ENCODE measurements at regions of chr13 and their contacts with region 1.

Region 1: GRCh38 chr13:33931397-33932311 is 113.7 kb downstream of the RFC3 start:
- DNase-seq: peak; percentile 2
- ATAC-seq: peak; percentile 77; the same call in 1 of the 2 replicates
- H3K4me3 ChIP-seq: no peak overlapping the region
- H3K27ac ChIP-seq: no peak overlapping the region
- H3K4me1 ChIP-seq: no peaks in the 10 kb centered on the region
- H3K27me3 ChIP-seq: no peaks in the 10 kb centered on the region
- CTCF ChIP-seq: peak; percentile 55

Region 2: DNA sequence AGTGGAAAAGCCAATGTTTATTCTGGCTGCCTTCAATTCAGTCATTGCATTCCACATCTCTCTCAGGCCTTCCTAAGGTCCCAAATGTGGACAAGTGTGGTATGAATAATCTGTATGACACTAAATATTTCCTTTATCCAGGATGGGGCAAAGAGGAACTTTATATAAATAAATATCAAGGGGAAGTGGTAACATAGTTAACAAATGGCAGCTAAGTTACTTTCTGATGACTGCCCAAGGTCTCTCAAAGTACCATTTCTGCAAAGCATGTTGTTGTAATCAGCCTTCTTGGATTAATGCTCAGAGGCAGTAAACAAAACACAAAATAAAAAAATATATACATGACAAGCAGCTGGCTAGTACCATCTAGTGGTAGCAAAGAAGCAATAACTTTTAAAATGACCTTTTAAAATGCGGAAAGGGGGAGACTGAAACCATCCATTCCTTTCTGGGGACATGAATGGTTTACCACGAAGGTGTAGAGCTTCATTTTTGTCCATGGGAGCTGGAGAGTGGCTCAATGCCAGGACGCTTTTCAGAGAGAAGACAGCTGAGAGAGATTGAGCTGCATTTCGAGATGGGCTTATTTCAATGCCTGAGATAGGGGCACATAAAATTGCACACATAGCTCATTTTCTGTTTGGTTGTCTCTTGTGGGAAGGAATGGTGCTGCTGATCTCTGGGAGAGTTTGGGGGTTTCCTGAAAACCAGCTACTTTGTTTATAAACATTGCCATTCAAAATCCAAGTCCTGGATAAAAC is 145.5 kb after region 1 on chr13:
- CTCF ChIA-PET with region 1: no interaction called
- POLR2A ChIA-PET with region 1: no interaction called
- in situ Hi-C with region 1: no loop called
- intact Hi-C with region 1: loop called (anchors 5 kb)
- DNase-seq: no peak
- ATAC-seq: no peak
- H3K4me3 ChIP-seq: no peak overlapping the region; a peak in 1 of 4 replicates
- H3K27ac ChIP-seq: no peak overlapping the region
- H3K4me1 ChIP-seq: no peaks in the 10 kb centered on the region
- H3K27me3 ChIP-seq: no peaks in the 10 kb centered on the region
- CTCF ChIP-seq: peak; percentile 66

Region 3: GRCh38 chr13:35157143-35157755 is 1225.6 kb after region 1 on chr13:
- CTCF ChIA-PET with region 1: no interaction called
- POLR2A ChIA-PET with region 1: no interaction called
- in situ Hi-C with region 1: no loop called
- intact Hi-C with region 1: loop called (anchors 2 kb)
- DNase-seq: no peak
- ATAC-seq: peak; percentile 58; the same call in 1 of the 2 replicates
- H3K4me3 ChIP-seq: no peak overlapping the region
- H3K27ac ChIP-seq: no peak overlapping the region
- H3K4me1 ChIP-seq: no peaks in the 10 kb centered on the region
- H3K27me3 ChIP-seq: no peaks in the 10 kb centered on the region
- CTCF ChIP-seq: peak; percentile 57; the same call in 1 of the 2 replicates

Measured in Panc1 (cell line).